Psoas muscle (tissue), 8 donors: ENCODE measurements at regions of chr3 and their contacts with region 1.

Region 1: DNA sequence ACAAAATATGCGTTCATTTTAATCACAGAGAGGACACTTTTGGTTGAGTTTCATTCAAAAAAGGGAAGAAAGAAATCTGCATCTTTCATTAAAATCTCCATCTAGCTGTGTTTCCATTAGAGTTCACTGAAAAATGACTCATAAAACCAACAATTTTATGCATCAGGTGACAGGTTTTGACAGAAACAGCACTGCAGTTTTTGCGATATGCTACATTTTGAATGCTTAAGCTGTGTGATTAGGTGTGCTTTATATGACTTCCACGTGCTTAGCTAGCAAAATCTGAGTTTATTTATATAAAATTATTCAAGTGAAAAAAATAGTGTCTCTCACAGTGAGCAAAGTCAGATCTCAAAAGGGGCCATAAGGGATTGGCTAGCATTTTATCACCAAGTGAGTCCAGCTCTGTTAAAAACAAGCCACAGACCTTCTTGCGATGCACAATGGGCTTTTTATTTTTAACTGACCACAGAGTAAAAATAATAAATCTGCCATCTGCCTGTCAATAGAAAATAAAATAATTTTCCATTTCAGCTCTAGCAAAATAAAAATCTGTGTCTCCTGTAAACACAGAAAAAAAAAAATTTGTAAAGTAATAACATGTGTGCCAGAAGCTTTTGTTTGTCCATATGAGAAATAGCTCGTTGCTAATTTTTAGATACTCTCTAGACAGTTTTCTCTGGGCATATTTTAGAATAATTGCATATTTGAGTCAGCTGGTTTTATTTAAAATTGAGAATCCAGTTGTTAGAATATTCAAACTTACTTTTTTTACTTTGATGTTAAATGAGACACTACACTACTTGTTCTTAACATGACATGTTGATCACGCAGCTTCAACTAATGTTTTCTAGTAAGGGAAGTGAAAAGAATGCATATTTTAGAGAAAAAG is 409.8 kb downstream of the ROBO2 start:
- DNase-seq: no peak
- ATAC-seq: no peak
- H3K4me3 ChIP-seq: no peak overlapping the region
- H3K27ac ChIP-seq: no peak overlapping the region
- H3K4me1 ChIP-seq: no peaks in the 10 kb centered on the region
- H3K27me3 ChIP-seq: no peaks in the 10 kb centered on the region
- CTCF ChIP-seq: no peak

Region 2: DNA sequence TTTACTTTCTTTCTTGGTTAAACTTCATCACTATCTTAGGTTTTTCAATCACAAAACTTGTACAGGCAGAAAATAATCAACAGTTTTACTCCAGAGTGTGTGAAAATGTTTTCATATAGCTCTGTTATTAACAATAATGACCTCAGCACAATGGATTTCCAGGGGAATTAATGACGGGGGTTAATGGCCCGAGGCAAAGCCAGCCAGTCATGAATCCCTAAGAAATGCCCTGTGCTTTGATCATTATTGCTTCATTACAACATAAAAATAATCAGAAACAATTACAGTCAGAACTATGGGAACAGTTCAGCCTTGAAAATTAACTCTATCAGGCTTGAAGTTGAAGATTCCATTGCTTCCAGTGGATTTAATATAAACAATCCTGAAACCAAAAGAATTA is 465.6 kb after region 1 on chr3:
- intact Hi-C with region 1: no loop called
- DNase-seq: no peak
- ATAC-seq: no peak
- H3K4me3 ChIP-seq: no peak overlapping the region
- H3K27ac ChIP-seq: no peak overlapping the region
- H3K4me1 ChIP-seq: no peaks in the 10 kb centered on the region
- H3K27me3 ChIP-seq: no peaks in the 10 kb centered on the region
- CTCF ChIP-seq: no peak

Region 3: GRCh38 chr3:78926523-78926922 is 1476.8 kb after region 1 on chr3:
- intact Hi-C with region 1: loop called in 1 of 2 experiments (anchors 5 kb)
- DNase-seq: no peak
- ATAC-seq: no peak
- H3K4me3 ChIP-seq: no peak overlapping the region
- H3K27ac ChIP-seq: no peak overlapping the region
- H3K4me1 ChIP-seq: no peaks in the 10 kb centered on the region
- H3K27me3 ChIP-seq: no peaks in the 10 kb centered on the region
- CTCF ChIP-seq: no peak